Prostate gland (tissue), 2 donors: ENCODE measurements at regions of chr11 and their contacts with region 1.

Region 1: DNA sequence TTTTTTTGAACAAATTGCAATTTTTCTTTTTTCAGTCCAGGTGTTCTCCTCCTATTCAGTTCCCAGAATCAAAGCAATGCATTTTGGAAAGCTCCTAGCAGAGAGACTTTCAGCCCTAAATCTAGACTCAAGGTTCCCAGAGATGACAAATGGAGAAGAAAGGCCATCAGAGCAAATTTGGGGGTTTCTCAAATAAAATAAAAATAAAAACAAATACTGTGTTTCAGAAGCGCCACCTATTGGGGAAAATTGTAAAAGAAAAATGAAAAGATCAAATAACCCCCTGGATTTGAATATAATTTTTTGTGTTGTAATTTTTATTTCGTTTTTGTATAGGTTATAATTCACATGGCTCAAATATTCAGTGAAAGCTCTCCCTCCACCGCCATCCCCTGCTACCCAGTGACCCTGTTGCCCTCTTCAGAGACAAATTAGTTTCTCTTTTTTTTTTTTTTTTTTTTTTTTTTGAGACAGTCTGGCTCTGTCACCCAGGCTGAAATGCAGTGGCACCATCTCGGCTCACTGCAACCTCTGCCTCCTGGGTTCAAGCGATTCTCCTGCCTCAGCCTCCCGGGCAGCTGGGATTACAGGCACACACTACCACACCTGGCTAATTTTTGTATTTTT is 6.2 kb upstream of the UBE4A start:
- DNase-seq: no peak
- H3K4me3 ChIP-seq: no peak overlapping the region
- H3K27ac ChIP-seq: no peak overlapping the region
- H3K4me1 ChIP-seq: no peaks in the 10 kb centered on the region
- H3K27me3 ChIP-seq: no peaks in the 10 kb centered on the region
- CTCF ChIP-seq: peak; percentile 23 to 56 (median 42)
- POLR2A ChIP-seq: no peak

Region 2: GRCh38 chr11:118198370-118198769 is 154.8 kb before region 1 on chr11:
- intact Hi-C with region 1: loop called (anchors 5 kb)
- DNase-seq: peak; percentile 66
- H3K4me3 ChIP-seq: no peak overlapping the region
- H3K27ac ChIP-seq: no peak overlapping the region
- H3K4me1 ChIP-seq: no peaks in the 10 kb centered on the region
- H3K27me3 ChIP-seq: no peaks in the 10 kb centered on the region
- CTCF ChIP-seq: peak; percentile 77 to 88 (median 86)
- POLR2A ChIP-seq: no peak